ENCODE measurements at regions of chr4 and their contacts with region 1.

Region 1: GRCh38 chr4:98143001-98143899 is at the start of gene STPG2:
- DNase-seq: peak; percentile 91 to 96
- ATAC-seq: peak; percentile 100
- H3K4me3 ChIP-seq: peak within 1 kb of the TSS; percentile 75
- H3K27ac ChIP-seq: peak within 1 kb of the TSS; percentile 82
- H3K4me1 ChIP-seq: no peaks in the 10 kb centered on the region
- H3K27me3 ChIP-seq: no peaks in the 10 kb centered on the region
- CTCF ChIP-seq: peak; percentile 42
- total RNA-seq, gene STPG2: 0.21 TPM in 1 of 4 donors, not detected in the others

Region 2: GRCh38 chr4:98260579-98261290 is 117.5 kb after region 1 on chr4:
- intact Hi-C with region 1: loop called (anchors 5 kb)
- DNase-seq: peak; percentile 96 to 98
- ATAC-seq: peak; percentile 94 to 97 (median 96)
- H3K4me3 ChIP-seq: peak overlapping the region; percentile 78
- H3K27ac ChIP-seq: peak overlapping the region; percentile 89
- H3K4me1 ChIP-seq: peaks cover 15% of the 10 kb centered on the region
- H3K27me3 ChIP-seq: no peaks in the 10 kb centered on the region
- CTCF ChIP-seq: no peak

Region 3: DNA sequence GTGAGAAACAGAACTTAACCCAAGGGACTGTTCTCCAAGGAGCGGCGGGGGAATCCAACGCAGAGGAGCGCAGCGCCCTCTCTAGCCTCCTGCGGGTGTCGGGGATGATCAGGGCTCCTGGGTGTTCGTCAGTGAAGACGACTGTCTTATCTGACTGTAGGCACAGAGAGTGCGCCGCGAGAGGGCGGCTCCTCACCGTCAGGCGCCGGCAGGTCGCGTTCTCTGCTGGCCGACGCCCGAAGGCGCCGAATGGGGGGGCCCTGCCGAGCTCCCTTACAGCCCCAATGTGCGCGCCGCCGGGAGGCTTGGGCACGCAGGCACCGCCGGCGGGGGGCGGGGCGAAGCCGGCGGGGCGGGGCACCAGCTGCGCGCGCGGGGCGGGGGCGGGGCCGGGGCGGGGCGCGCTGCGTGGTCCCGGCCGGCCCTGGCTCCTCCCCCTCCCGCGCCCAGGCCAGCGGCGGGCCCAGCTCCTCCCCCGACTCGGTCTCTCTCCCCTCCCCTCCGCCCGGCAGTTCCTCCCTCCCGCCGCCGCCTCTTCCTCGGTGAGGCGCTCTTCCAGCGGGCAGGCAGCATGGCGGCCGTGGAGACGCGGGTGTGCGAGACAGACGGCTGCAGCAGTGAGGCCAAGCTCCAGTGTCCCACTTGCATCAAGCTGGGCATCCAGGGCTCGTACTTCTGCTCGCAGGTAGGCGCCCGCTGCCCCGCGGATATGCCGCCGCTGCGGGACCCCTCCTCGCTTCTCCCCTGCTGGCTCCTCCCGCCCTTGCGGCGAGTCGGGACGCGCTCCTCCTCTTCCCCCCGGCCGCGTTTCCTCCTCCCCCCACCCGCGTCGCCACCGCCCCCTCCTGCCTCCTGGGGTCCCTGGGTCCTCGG is 852.2 kb after region 1 on chr4 and contains the start of gene METAP1:
- intact Hi-C with region 1: loop called in 1 of 2 experiments (anchors 10 kb)
- DNase-seq: peak; percentile 96 to 98
- ATAC-seq: peak; percentile 92 to 94 (median 92)
- H3K4me3 ChIP-seq: peak within 1 kb of the TSS; percentile 98
- H3K27ac ChIP-seq: peak within 1 kb of the TSS; percentile 94
- H3K4me1 ChIP-seq: peaks cover 13% of the 10 kb centered on the region
- H3K27me3 ChIP-seq: no peaks in the 10 kb centered on the region
- CTCF ChIP-seq: peak; percentile 49
- total RNA-seq, gene METAP1: 18.2 to 36.9 (median 30.0) TPM

Measured in psoas muscle (tissue), 8 donors.